Cardiac septum (tissue), 1 donor: ENCODE measurements at regions of chr16 and their contacts with region 1.

Region 1: GRCh38 chr16:53022374-53022773 is 30.3 kb downstream of the CHD9NB start:
- DNase-seq: no peak

Region 2: GRCh38 chr16:52068447-52069074 is 953.8 kb before region 1 on chr16:
- intact Hi-C with region 1: loop called (anchors 5 kb)
- DNase-seq: no peak

Region 3: DNA sequence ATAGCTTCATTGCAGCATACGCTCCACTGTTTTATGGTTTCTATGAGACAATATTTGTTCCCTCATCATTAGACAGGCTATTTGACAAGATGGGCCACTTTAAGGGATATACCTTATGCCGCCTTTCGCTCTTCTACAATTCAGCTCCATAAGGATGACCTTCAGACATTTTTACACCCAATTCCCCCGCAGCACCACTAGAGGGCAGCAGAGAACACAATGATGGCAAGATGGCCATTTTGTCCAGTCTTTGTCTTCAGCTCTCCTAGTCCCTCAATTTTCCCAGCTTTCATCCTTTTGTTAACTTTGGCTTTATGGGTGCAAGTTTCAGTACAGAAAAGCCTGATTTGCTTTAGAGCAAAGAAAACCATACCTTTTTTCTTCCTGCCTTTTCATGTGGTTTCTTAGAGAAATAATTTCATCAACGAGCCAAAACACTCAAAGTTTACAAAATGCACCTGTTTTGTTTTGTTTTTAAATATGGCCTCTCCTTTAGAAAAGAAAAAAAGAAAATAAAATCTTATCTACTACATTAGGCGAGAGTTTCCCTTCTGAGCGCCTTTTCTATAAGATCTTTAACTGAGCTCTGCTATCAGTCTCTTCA is 830.7 kb before region 1 on chr16:
- intact Hi-C with region 1: loop called (anchors 5 kb)
- DNase-seq: no peak